Ascending aorta (tissue), 2 donors: ENCODE measurements at regions of chr4 and their contacts with region 1.

Region 1: DNA sequence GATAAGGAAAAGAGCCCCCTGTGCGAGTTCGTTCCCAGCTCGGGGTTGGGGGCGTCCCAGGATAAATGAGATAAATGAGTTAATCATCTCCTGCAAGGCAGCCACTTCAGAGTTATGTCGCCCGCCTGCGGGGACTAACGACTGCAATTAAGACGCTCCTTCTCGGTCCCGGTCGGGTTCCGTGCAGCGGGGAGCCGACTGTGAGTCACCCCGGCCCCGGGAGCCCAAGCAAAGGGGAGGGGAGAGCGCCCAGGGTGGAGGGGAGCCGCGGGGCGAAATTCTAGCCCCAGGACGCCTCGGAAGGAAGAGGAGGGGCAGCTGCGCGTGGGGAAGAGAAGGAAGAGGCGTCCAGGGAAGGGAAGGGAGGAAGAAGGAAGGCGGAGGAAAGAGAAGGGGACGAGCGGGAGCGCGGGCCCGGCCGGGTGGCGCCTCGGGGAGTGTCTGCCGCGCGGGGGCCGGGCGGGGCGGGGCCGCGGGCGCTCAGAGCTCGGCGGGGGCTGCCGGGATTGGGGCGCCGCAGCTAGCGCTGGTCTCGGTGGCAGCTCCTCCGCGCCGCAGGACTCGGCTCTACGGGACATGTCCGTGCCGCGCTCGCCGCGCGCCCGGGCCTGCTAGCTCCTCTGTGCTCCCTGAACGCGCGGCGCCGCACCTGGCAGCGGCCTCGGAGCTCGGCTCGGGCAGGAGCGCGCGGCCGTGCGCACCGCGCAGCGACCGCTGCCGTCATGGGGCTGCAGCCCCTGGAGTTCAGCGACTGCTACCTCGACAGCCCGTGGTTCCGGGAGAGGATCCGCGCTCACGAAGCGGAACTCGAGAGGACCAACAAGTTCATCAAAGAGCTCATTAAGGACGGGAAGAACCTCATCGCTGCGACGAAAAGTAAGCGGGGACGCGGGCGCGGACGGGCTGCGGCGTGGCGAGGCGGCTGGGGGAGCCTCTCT is at the start of gene ARHGAP10:
- DNase-seq: peak; percentile 32 to 89
- H3K4me3 ChIP-seq: peak within 1 kb of the TSS; percentile 80 to 94
- H3K27ac ChIP-seq: peak within 1 kb of the TSS; percentile 86 to 89
- H3K4me1 ChIP-seq: peaks cover 0 to 3% of the 10 kb centered on the region in 2 donors
- H3K27me3 ChIP-seq: no peaks in the 10 kb centered on the region
- CTCF ChIP-seq: peak in 1 of 3 experiments; percentile 3
- total RNA-seq, gene ARHGAP10: 77.3 TPM

Region 2: GRCh38 chr4:147683717-147684700 is 47.8 kb before region 1 on chr4 and contains the start of gene PRMT9:
- intact Hi-C with region 1: loop called (anchors 2 kb)
- DNase-seq: peak; percentile 43 to 94
- H3K4me3 ChIP-seq: peak within 1 kb of the TSS; percentile 84 to 94
- H3K27ac ChIP-seq: peak within 1 kb of the TSS; percentile 85 to 87
- H3K4me1 ChIP-seq: peaks cover 0 to 10% of the 10 kb centered on the region in 2 donors
- H3K27me3 ChIP-seq: no peaks in the 10 kb centered on the region
- CTCF ChIP-seq: no peak
- total RNA-seq, gene PRMT9: 1.6 TPM

Region 3: DNA sequence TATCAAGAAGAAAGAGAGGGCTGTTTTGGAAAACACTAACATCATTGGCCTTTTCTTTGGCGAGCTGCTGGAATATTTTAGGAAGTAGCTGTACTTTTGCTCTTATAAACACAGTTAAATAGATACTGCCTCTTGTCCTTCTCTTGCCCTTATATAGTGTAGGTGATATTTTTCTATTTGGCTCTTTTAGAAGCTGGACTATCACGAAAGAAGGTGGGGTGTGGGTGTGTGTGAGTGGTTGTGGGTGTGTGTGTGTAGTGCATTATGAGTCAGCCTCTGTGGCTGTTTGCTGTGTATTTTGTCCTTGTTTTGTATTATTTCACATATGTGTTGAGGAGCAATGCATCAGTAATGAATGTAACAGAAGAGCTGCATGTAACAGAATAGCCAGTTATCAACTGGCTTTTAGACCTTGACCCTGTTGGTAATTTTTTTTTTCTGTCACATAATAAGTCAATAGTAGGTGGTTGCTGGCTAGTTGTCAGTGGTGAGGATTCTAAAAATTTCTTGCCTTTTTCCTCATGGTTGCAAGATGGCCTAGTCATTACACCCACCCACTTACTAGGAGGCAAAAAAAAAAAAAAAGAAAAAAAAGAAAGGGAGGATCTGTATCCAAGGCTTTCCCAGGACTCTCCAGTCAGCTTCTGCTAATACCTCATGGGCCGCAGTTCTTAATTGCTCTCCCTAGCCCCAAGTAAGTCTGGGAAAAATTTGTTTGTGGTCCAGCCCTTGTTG is 23.9 kb after region 1 on chr4:
- intact Hi-C with region 1: loop called (anchors 2 kb)
- DNase-seq: no peak
- H3K4me3 ChIP-seq: peak overlapping the region; percentile 14 to 55
- H3K27ac ChIP-seq: peak overlapping the region; percentile 76 to 83
- H3K4me1 ChIP-seq: peaks cover 7 to 51% of the 10 kb centered on the region in 2 donors
- H3K27me3 ChIP-seq: no peaks in the 10 kb centered on the region
- CTCF ChIP-seq: no peak

Region 4: GRCh38 chr4:147786031-147786430 is 54.2 kb after region 1 on chr4:
- intact Hi-C with region 1: loop called (anchors 5 kb)
- DNase-seq: no peak
- H3K4me3 ChIP-seq: no peak overlapping the region
- H3K27ac ChIP-seq: no peak overlapping the region
- H3K4me1 ChIP-seq: peaks cover 0 to 38% of the 10 kb centered on the region in 2 donors
- H3K27me3 ChIP-seq: no peaks in the 10 kb centered on the region
- CTCF ChIP-seq: no peak

Region 5: DNA sequence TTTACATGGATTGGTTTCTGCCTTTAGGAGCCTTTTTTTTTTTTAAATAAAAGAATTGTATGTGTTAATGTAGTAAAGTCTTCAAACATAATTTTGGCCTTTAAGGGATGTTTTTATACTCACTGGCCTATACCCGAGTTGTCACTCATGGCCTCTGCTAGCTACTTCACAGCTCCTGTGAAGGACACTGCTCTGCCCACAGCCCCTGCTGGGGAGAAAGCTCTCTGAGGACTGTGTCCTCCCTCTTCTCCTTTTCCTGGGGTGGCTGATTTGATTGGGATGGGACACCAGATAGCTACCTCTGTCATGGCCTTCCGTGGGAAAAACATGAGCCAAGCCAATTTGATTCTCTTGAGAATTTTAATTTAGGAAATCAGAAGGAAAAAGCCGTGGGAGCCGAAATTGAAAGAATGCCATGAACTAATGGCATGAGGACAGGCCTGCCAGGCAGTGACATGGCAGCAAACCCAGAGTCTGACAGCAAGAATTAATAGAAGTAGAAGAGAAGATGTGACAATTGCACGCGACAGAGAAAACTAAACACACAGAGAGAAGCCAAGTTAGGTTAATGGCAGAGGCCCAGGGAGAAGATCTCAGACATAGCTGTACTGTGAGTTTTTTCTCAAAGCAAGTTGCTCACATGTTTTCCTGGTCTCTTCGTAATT is 81.4 kb after region 1 on chr4:
- intact Hi-C with region 1: no loop called
- DNase-seq: no peak
- H3K4me3 ChIP-seq: peak overlapping the region in 1 of 2 donors; percentile 31
- H3K27ac ChIP-seq: peak overlapping the region; percentile 36 to 91
- H3K4me1 ChIP-seq: peaks cover 36 to 79% of the 10 kb centered on the region in 2 donors
- H3K27me3 ChIP-seq: no peaks in the 10 kb centered on the region
- CTCF ChIP-seq: no peak

Region 6: GRCh38 chr4:147831551-147832177 is 99.8 kb after region 1 on chr4:
- intact Hi-C with region 1: loop called (anchors 2 kb)
- DNase-seq: peak; percentile 37 to 82
- H3K4me3 ChIP-seq: no peak overlapping the region
- H3K27ac ChIP-seq: peak overlapping the region; percentile 86 to 94
- H3K4me1 ChIP-seq: peaks cover 22 to 74% of the 10 kb centered on the region in 2 donors
- H3K27me3 ChIP-seq: no peaks in the 10 kb centered on the region
- CTCF ChIP-seq: no peak

Region 7: GRCh38 chr4:147866532-147867271 is 134.9 kb after region 1 on chr4:
- intact Hi-C with region 1: loop called (anchors 2 kb)
- DNase-seq: peak; percentile 60 to 95
- H3K4me3 ChIP-seq: no peak overlapping the region
- H3K27ac ChIP-seq: peak overlapping the region in 1 of 2 donors; percentile 68
- H3K4me1 ChIP-seq: peaks cover 3 to 40% of the 10 kb centered on the region in 2 donors
- H3K27me3 ChIP-seq: no peaks in the 10 kb centered on the region
- CTCF ChIP-seq: peak; percentile 96 to 99 (median 97)